Dorsolateral prefrontal cortex (tissue), 120 donors: ENCODE measurements at regions of chr19 and their contacts with region 1.

Region 1: DNA sequence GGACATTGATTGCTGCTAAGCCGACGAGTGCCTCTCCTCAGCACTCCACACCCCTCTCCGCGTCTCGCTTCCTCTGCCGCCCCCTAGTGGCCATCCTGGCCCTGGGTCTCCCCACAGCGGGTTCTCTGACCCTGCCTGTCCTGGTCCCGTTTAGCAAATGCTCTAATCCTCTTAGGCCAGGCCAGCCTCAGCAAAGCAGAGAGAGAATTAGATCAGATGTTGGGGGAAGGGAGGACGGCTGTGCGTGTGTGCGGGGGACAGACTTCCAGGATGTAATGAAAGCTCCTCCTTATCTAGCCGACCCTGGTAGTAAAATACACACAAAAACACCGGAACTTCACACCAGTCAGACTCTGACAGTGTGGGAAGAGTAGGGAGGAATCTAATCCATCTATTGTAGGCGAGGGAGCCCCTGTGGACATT is 4.5 kb downstream of the TPRX2 start:
- DNase-seq: peak; percentile 48 to 88 (median 74)
- H3K4me3 ChIP-seq: no peak overlapping the region
- H3K27ac ChIP-seq: peak overlapping the region in 1 of 59 donors; percentile 25
- H3K27me3 ChIP-seq: peaks cover 0 to 1% (median 0%) of the 10 kb centered on the region in 45 donors
- CTCF ChIP-seq: peak; percentile 57 to 98 (median 89)

Region 2: DNA sequence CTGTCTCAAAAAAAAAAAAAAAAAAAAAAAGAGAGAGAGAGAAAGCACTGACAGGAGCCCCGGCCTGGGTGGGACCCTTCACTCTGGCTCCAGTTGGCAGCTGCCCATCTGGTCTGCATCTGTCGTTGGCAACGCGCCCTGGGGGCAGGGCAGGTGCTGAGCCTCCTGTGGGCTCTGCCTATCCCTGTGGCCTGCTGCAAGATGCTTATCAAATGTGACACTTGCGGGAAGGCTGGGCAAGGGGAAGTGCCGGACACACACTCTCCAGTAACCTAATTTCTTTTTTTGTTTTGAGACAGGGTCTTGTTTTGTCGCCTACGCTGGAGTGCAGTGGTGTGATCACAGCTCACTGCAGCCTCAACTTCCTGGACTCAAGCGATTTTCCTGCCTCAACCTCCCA is 368.8 kb before region 1 on chr19:
- intact Hi-C with region 1: no loop called
- DNase-seq: no peak
- H3K4me3 ChIP-seq: no peak overlapping the region
- H3K27ac ChIP-seq: peak overlapping the region in 51 of 59 donors; percentile 4 to 96 (median 82)
- H3K27me3 ChIP-seq: no peaks in the 10 kb centered on the region
- CTCF ChIP-seq: no peak

Region 3: DNA sequence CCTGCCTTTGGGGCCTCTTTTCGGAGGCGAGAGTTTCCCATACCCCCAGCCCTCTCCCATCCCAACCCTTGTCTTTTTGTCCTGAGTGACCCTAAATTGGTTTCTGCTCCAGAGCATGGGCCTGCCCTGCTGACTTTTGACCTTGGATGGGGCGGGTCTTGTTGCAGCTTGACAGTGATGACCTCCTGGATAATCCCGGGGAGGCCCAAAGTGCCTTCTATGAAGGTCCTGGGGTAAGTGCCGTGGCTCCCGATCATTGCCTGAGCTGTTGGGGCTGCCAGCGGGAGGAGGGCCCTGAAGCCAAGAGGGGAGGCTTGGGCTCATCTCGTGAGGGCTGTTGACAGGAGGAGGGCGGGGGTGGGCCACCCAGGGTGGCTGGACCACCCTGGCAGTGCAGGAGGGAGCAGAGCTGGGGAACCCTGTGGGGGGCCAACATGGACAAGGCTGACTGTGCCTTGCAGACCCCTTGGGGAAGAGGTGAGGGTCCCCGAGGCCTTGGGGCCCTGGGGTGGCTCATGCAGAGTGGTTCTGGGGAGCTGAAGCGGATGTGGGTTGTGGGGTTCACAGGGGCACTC is 187.8 kb before region 1 on chr19:
- intact Hi-C with region 1: no loop called
- DNase-seq: no peak
- H3K4me3 ChIP-seq: no peak overlapping the region
- H3K27ac ChIP-seq: peak overlapping the region in 2 of 59 donors; percentile 14 to 21
- H3K27me3 ChIP-seq: no peaks in the 10 kb centered on the region
- CTCF ChIP-seq: no peak

Region 4: GRCh38 chr19:47765523-47766358 is 97.8 kb before region 1 on chr19:
- intact Hi-C with region 1: loop called in 1 of 2 experiments (anchors 5 kb)
- DNase-seq: peak in 9 of 10 donors; percentile 44 to 80 (median 68)
- H3K4me3 ChIP-seq: no peak overlapping the region
- H3K27ac ChIP-seq: peak overlapping the region in 21 of 59 donors; percentile 4 to 74 (median 41)
- H3K27me3 ChIP-seq: no peaks in the 10 kb centered on the region
- CTCF ChIP-seq: peak; percentile 27 to 91 (median 80)

Region 5: GRCh38 chr19:47813304-47814004 is 50.1 kb before region 1 on chr19:
- intact Hi-C with region 1: loop called in 1 of 2 experiments (anchors 10 kb)
- DNase-seq: peak in 6 of 10 donors; percentile 7 to 63 (median 24)
- H3K4me3 ChIP-seq: no peak overlapping the region
- H3K27ac ChIP-seq: no peak overlapping the region
- H3K27me3 ChIP-seq: peaks cover 0 to 9% (median 0%) of the 10 kb centered on the region in 45 donors
- CTCF ChIP-seq: peak in 53 of 56 donors; percentile 17 to 62 (median 46)

Region 6: DNA sequence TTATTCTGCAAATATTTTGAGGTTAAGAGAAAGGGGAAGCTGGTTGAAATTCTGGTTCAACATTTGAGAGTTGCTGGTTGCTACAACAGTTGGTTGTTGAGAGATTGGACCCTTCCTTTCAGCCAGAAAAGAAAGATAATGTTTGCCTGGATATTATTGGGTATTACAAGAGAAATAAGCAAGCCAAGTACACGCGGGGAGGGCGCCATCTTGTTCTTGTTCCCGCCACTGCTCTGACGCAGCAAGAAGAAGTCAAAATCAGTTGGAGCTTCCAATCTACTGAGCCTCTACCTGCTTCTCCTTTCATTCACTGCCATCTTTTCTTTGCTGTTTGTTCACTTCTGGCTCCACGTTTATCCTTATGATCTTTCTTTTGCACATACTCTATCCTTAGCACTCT is 110.0 kb after region 1 on chr19:
- intact Hi-C with region 1: no loop called
- DNase-seq: no peak
- H3K4me3 ChIP-seq: no peak overlapping the region
- H3K27ac ChIP-seq: no peak overlapping the region
- H3K27me3 ChIP-seq: peaks cover 0 to 26% (median 0%) of the 10 kb centered on the region in 45 donors
- CTCF ChIP-seq: no peak